Sciatic nerve (tissue), 2 donors: ENCODE measurements at regions of chr11 and their contacts with region 1.

Region 1: DNA sequence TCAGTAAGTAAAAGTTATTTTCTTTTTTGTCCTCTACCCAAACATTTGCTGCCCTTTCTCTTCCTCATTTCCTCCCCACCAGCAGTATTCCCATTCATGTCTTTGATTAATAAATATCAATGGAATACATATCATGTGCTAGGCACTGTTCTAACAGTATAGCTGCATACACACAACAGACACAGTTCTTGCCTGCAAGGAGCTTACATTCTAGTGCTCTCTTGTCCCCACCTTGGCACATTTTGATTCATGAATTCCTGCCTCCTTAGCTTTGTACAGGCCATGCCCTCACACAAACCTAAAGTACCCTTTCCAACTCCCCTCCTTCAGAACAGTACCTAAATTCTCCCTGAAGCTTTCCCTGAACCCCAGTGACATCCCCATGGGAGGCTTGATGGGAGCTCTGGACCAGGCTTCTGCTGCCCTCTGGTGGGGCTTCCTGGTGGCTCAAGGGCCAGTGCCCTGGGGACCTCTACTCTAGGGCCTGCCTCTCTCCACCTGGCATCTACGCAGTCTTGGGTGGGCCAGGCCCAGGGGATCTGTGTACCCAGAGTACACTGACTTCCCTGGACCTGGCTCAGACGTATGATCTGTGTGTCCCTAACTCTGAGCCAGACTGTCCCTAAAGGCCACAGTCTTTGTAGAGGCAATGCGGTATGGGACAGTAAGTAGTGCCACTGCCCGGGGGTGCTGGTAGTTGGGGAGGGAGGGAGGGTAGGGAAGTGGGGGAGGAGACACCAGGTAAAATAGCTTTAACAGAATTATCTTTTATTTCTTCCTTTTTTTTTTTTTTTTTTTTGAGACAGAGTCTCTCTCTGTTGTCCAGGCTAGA is 14.1 kb downstream of the RPS13 start:
- DNase-seq: peak; percentile 73
- ATAC-seq: peak; percentile 83

Region 2: DNA sequence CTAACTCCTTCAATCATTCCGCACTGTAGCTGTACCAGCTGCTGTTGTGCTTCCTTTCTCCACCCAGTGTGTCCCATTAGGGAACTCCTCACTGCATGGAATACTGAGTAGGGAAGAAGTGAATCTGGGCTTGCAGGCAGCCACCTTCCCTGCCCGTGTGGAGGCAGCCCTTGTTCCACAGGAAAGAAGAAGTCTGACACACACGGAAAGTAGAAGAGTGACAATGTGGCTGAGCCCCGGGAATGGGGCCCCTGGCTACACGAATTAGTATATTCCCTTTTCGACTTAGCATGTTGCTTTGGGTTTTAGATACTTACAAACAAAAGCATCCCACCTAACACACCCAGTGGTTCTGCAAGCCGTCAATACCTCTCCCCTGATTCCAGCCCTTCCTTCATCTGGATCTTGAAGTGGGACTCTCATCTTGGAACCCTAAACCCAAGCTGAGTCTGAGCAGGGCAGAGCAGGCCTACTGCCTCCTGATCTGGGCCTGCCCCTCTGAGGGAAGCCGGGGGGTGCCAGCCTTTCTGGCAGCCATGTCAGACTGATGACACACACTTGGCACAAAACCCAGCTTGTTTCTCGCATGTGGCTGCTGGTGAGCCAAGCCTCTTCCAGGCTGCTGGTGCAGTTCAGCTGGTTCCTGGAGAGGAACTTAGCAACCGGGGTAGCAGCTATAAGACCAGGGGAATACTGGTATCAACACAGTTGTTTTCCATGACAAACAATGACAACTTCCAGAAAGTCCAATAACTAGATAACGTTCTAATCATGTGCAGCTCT is 253.3 kb before region 1 on chr11:
- intact Hi-C with region 1: loop called (anchors 10 kb)
- DNase-seq: peak; percentile 72
- ATAC-seq: peak; percentile 13

Region 3: GRCh38 chr11:16902781-16903378 is 160.5 kb before region 1 on chr11:
- intact Hi-C with region 1: no loop called
- DNase-seq: no peak
- ATAC-seq: no peak

Region 4: GRCh38 chr11:16945671-16946469 is 117.5 kb before region 1 on chr11:
- intact Hi-C with region 1: loop called (anchors 5 kb)
- DNase-seq: peak; percentile 69
- ATAC-seq: peak; percentile 93

Region 5: DNA sequence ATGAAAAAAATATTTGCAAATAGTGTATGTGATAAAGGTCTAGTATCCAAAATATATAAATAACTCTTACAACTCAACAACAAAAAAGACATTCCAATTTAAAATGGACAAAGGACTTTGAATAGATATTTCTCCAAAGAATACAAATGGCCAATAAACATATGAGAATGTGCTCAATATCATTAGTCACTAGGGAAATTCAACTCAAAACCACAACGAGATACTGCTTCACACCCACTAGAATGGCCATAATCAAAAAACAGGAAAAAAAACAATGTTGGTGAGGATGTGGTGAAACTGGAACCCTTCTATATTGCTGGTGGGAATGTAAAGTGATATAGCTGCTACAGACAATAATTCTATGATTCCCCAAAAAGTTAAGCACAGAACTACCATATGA is 52.7 kb after region 1 on chr11:
- intact Hi-C with region 1: no loop called
- DNase-seq: no peak
- ATAC-seq: no peak